Activated B cell treated with CpG ODN at 0.5 μM for 24 hours (primary cell): ENCODE measurements at regions of chr18 and their contacts with region 1.

Region 1: DNA sequence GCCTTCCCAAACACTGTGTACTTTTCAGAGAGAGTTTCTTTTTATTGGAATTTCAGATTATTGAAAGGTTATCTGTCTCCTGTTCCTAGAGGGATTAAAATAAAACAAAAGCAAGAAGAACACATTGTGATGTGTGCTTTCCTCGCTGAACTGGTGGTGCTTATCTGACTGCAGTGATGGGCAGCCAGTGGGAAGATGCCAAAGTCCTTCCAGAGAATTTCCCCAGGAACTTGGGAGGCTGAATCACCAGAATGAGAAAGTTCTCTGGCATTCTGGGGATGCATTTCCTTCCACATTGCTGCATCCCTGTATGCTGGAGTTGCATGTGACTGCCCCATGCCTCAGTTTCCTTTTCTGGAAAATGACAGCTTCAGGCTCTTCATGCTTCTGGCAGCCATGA is 53.9 kb upstream of the SEC11C start:
- DNase-seq: no peak
- ATAC-seq: no peak
- H3K4me3 Mint-ChIP-seq: no peak overlapping the region
- H3K27ac Mint-ChIP-seq: no peak overlapping the region
- H3K4me1 Mint-ChIP-seq: peaks cover 33% of the 10 kb centered on the region
- H3K27me3 Mint-ChIP-seq: peaks cover 5% of the 10 kb centered on the region
- CTCF ChIP-seq: no peak

Region 2: GRCh38 chr18:58819051-58819450 is 266.7 kb before region 1 on chr18:
- CTCF ChIA-PET with region 1: no interaction called
- POLR2A ChIA-PET with region 1: no interaction called
- intact Hi-C with region 1: no loop called
- DNase-seq: no peak
- ATAC-seq: no peak
- H3K4me3 Mint-ChIP-seq: no peak overlapping the region
- H3K27ac Mint-ChIP-seq: no peak overlapping the region
- H3K4me1 Mint-ChIP-seq: no peaks in the 10 kb centered on the region
- H3K27me3 Mint-ChIP-seq: peaks cover 3% of the 10 kb centered on the region
- CTCF ChIP-seq: no peak

Region 3: DNA sequence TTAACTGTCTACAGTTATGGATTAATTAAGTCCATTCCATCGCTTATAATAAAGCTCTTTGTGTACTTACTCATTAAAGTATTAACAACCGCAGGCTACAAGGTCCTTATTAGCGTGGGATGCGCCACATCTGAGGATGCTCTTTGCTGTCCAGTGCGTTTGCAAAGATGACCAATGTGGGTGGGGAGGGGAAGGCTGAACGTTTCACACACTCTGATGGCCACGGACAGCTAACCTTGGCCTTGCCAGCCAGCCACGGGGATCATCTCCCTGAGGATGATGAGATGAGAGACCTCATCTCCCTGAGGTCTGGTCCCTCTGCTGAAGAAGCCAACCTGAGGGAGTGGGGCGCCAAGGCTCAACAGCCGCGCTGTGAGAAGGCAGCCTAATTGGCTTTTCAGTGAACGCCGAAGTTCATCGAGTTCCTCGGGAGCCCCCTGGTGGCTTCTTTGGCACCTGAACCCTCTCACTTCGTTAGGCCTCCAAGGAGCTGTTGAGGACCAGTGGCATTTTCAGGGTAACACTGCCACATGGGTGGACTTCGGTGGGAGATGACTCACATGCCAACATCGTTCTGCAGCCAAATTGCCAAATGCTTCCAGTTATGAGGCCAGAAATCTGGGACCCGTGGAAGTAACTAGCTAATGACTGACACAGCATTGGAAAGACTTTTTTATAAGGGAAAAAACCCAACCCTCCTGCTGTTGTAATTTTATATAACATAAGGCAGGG is 15.4 kb before region 1 on chr18:
- CTCF ChIA-PET with region 1: interaction called, 33 read pairs
- POLR2A ChIA-PET with region 1: interaction called, 3 read pairs
- intact Hi-C with region 1: no loop called
- DNase-seq: peak; percentile 68
- ATAC-seq: peak; percentile 85
- H3K4me3 Mint-ChIP-seq: no peak overlapping the region
- H3K27ac Mint-ChIP-seq: peak overlapping the region; percentile 54
- H3K4me1 Mint-ChIP-seq: peaks cover 25% of the 10 kb centered on the region
- H3K27me3 Mint-ChIP-seq: no peaks in the 10 kb centered on the region
- CTCF ChIP-seq: peak; percentile 39

Region 4: GRCh38 chr18:59139371-59140298 is 53.8 kb after region 1 on chr18 and contains the start of gene SEC11C:
- CTCF ChIA-PET with region 1: interaction called, 5 read pairs
- POLR2A ChIA-PET with region 1: interaction called, 20 read pairs
- intact Hi-C with region 1: loop called (anchors 1 kb)
- DNase-seq: peak; percentile 93
- ATAC-seq: peak; percentile 84
- H3K4me3 Mint-ChIP-seq: peak within 1 kb of the TSS; percentile 95
- H3K27ac Mint-ChIP-seq: peak within 1 kb of the TSS; percentile 100
- H3K4me1 Mint-ChIP-seq: peaks cover 44% of the 10 kb centered on the region
- H3K27me3 Mint-ChIP-seq: peaks cover 8% of the 10 kb centered on the region
- CTCF ChIP-seq: no peak
- total RNA-seq, gene SEC11C: 112 and 126 TPM in 2 replicates

Region 5: GRCh38 chr18:59159986-59160385 is 74.2 kb after region 1 on chr18:
- CTCF ChIA-PET with region 1: no interaction called
- POLR2A ChIA-PET with region 1: no interaction called
- intact Hi-C with region 1: no loop called
- DNase-seq: no peak
- ATAC-seq: no peak
- H3K4me3 Mint-ChIP-seq: no peak overlapping the region
- H3K27ac Mint-ChIP-seq: no peak overlapping the region
- H3K4me1 Mint-ChIP-seq: no peaks in the 10 kb centered on the region
- H3K27me3 Mint-ChIP-seq: no peaks in the 10 kb centered on the region
- CTCF ChIP-seq: no peak

Region 6: DNA sequence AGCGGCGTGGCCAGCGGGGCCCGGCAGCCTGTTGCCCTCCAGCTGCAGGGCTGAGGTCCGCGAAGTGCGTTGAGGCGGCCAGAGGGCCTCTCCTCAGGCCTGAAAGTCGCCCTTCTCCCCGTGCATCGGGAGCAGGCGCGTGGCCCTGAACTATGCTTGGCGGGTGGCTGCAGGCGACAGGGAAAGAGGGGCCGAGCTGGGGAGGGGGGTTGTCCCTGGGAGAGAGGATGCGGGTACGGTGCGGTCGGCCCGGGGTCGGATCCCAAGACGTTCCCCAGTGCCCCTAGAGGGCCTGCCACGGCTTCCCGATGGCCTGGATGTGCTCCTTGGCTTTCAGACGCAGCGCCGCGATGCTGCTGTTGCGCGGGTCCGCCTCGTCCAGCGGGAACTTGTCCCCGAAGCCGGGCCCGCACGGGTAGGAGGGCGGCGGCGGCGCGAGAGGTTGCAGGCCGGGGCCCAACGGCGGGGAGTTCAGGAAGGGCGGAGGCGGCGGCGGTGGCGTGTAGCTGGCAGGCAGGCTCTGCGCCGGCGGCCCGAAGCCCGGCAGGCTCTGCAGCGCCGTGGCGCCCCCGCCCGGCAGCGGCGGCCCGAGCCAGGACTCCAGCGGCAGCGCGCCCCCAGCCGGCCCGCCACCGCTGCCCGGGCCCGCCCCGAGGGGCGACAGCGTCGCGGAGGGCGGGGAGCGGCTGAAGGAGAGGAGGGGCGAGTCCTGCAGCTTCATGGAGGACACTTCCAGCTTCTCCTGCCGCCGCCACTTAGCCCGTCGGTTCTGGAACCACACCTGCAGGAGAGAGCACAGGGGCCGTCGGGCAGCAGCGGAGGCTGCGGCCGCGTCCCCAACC is 183.1 kb after region 1 on chr18:
- CTCF ChIA-PET with region 1: interaction called, 7 read pairs
- POLR2A ChIA-PET with region 1: no interaction called
- intact Hi-C with region 1: loop called (anchors 5 kb)
- DNase-seq: no peak
- ATAC-seq: peak; percentile 48
- H3K4me3 Mint-ChIP-seq: peak overlapping the region; percentile 66
- H3K27ac Mint-ChIP-seq: no peak overlapping the region
- H3K4me1 Mint-ChIP-seq: peaks cover 49% of the 10 kb centered on the region
- H3K27me3 Mint-ChIP-seq: peaks cover 67% of the 10 kb centered on the region
- CTCF ChIP-seq: no peak

Region 7: DNA sequence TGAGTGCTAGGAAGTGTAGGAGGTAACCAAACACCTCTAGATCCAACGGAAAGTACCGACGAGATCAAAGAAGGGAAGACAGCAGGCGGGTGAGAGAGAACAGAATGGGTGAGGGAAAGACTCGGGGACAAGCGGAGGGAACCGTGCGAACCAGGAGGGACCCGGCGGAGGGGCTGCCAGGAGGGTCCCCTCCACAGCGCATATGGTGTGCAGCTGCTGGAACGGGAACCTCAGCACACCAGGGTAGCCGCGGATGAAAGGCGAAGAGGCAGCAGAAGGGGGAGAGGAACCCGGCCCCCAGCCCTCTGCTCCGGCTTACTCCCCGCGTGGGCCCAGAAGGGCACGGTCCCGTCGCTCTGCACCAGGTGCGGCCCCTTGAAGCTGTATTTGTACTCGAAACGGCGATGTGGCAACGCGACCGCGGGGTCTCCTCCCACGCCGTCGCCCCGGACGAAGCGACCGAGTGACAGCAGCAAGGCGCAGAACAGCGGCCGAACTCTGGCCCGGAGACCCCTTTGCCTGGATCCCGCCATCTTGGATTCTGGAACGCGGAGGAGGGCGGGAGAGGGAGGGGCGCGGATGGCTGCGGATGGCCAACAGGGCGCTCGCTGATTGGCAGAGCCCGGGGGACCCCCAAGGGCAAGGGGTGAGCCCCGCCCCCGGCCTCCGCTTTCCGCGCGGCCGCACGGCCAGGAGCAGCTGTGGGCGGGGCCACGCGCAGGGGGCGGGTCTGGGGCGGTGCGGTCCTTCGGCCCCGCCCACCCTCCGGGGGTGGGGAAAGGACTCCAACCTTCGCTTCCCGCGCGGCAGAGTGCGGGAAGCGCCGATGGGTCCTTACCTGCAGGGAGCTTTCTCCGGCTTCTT is 273.1 kb after region 1 on chr18 and contains the start of gene LMAN1:
- CTCF ChIA-PET with region 1: interaction called, 3 read pairs
- POLR2A ChIA-PET with region 1: no interaction called
- intact Hi-C with region 1: loop called (anchors 5 kb)
- DNase-seq: peak; percentile 92
- ATAC-seq: peak; percentile 96
- H3K4me3 Mint-ChIP-seq: peak within 1 kb of the TSS; percentile 94
- H3K27ac Mint-ChIP-seq: peak within 1 kb of the TSS; percentile 82
- H3K4me1 Mint-ChIP-seq: peaks cover 35% of the 10 kb centered on the region
- H3K27me3 Mint-ChIP-seq: peaks cover 2% of the 10 kb centered on the region
- CTCF ChIP-seq: no peak
- total RNA-seq, gene LMAN1: 33.5 and 40.3 TPM in 2 replicates

Region 8: DNA sequence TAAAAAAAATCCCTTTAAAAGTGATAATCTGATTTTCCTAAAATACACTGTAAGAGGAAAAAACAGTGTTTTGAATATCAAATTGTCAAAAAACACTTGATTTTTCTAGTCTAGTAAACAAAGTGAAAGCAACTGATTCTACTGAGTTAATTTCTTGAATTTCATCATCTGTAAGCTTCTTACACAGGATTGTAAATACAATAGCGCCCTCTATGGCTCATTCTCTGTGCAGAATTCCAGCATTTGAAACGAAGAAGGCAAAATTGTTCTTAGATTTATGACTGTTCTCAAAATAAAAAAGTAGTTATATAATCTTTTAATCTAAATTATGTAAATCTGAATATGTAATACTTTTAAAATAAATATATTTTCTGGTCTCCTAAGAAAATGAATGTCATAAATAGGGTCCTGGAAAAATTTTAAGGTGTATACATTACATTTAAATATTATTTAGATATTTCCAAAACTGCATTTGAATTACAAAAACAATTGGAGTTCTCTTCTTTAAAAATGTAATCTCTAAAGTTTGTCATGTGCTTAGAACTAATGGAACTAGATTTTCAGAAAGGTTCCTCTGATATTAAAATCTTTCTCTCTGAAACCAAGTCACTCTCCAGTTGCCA is 1463.7 kb after region 1 on chr18:
- CTCF ChIA-PET with region 1: no interaction called
- POLR2A ChIA-PET with region 1: no interaction called
- intact Hi-C with region 1: loop called (anchors 5 kb)
- DNase-seq: no peak
- ATAC-seq: no peak
- H3K4me3 Mint-ChIP-seq: no peak overlapping the region
- H3K27ac Mint-ChIP-seq: no peak overlapping the region
- H3K4me1 Mint-ChIP-seq: no peaks in the 10 kb centered on the region
- H3K27me3 Mint-ChIP-seq: no peaks in the 10 kb centered on the region
- CTCF ChIP-seq: peak; percentile 78